HEK293 (cell line): ENCODE measurements at regions of chr16 and their contacts with region 1.

Region 1: DNA sequence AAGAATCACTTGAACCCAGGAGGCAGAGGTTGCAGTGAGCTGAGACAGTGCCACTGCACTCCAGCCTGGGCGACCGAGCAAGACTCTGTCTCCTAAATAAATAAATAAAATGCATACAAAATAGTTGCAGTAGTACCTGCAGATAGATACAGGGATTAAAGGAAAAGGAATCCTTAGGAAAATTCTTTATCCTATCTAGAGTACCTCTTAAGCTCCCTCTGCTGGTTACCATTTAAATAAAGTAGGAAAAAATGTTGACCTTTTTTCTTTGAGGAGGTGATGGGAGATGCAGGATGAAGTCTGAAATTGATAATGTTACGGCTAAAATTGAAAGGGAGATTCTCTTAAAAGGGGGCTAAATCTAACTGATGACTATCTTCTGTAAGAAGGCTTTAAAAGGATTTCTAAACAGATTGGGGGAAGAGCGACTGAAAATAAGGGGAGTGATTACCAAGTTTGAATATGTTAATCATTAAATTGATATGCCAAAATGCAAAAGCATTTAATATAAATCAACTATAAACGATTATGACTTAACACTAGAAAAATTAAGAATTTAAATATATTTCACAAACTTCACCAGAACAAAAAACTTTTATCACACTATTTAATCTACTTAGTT is 29.4 kb downstream of the C16orf87 start:
- H3K4me3 ChIP-seq: no peak overlapping the region
- H3K27ac ChIP-seq: no peak overlapping the region
- H3K4me1 ChIP-seq: no peaks in the 10 kb centered on the region
- CTCF ChIP-seq: no peak

Region 2: GRCh38 chr16:46789499-46790414 is 11.8 kb before region 1 on chr16:
- CTCF ChIA-PET with region 1: interaction called, 13 read pairs
- POLR2A ChIA-PET with region 1: no interaction called
- H3K4me3 ChIP-seq: peak overlapping the region; percentile 48
- H3K27ac ChIP-seq: no peak overlapping the region; the same call in 1 of the 2 replicates
- H3K4me1 ChIP-seq: no peaks in the 10 kb centered on the region
- CTCF ChIP-seq: no peak